Activated CD8-positive, alpha-beta T cell treated with anti-CD3 and anti-CD28 coated beads for 36 hours (primary cell): ENCODE measurements at regions of chr10 and their contacts with region 1.

Region 1: GRCh38 chr10:49407552-49408137 is 11.8 kb upstream of the DRGX start:
- DNase-seq: peak; percentile 84
- ATAC-seq: peak; percentile 77
- H3K4me3 Mint-ChIP-seq: no peak overlapping the region
- H3K27ac Mint-ChIP-seq: no peak overlapping the region
- H3K4me1 Mint-ChIP-seq: no peaks in the 10 kb centered on the region
- H3K27me3 Mint-ChIP-seq: peaks cover 37% of the 10 kb centered on the region
- CTCF ChIP-seq: peak; percentile 83

Region 2: GRCh38 chr10:49047128-49047639 is 360.5 kb before region 1 on chr10:
- CTCF ChIA-PET with region 1: no interaction called
- POLR2A ChIA-PET with region 1: no interaction called
- intact Hi-C with region 1: no loop called
- DNase-seq: no peak
- ATAC-seq: no peak
- H3K4me3 Mint-ChIP-seq: no peak overlapping the region
- H3K27ac Mint-ChIP-seq: no peak overlapping the region
- H3K4me1 Mint-ChIP-seq: no peaks in the 10 kb centered on the region
- H3K27me3 Mint-ChIP-seq: peaks cover 2% of the 10 kb centered on the region
- CTCF ChIP-seq: no peak

Region 3: DNA sequence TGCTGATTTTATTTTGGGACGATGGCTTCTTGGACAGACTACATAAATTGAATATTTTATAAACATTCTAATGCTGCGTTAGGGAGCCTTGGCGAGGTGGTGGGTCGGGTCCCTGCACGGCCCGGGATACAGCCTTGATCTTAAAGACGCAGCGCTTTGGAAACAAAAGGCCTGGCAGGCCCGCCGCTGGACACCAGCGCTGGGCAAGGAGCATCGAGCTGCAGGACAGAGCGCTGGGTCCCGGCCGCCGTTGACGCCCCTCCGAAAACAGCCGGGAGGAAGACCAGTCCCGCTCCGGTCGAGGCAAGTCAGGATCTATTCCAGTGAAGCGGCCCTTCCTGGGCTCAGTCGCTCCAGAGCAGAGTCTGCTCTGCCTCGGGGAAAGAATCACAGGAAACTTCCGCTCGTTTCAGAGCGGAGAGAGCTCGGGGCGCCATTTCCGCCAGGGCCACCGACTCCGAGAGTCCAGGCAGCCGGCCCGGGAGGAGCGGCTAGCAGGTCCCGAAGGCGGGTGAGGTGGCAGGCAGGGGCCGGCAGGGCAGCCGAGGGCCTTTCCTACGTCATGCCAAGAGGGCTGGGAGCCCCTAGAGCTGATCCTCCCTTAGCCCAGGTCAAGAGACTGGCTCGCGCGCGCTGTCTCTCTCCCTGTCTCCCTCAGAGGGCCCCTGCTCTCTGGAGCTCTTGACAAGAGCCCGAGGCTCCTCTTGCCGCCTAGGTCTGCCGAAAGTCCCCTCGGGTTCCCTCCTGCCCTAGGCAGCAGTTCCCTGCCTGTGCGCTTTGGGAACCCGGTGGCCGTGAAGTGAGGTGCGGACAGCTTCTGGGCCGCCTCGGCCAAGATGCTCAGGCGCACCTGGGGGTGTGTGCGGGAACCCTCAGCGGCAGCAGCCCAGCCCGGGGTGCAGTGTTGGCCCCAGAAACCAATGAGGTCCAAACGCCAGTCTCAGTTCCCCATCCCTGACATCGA is 10.3 kb before region 1 on chr10:
- CTCF ChIA-PET with region 1: interaction called, 11 read pairs
- POLR2A ChIA-PET with region 1: no interaction called
- intact Hi-C with region 1: no loop called
- DNase-seq: peak; percentile 5
- ATAC-seq: peak; percentile 22
- H3K4me3 Mint-ChIP-seq: no peak overlapping the region
- H3K27ac Mint-ChIP-seq: no peak overlapping the region
- H3K4me1 Mint-ChIP-seq: peaks cover 7% of the 10 kb centered on the region
- H3K27me3 Mint-ChIP-seq: peaks cover 68% of the 10 kb centered on the region
- CTCF ChIP-seq: no peak

Region 4: GRCh38 chr10:49446031-49446430 is 38.4 kb after region 1 on chr10:
- CTCF ChIA-PET with region 1: interaction called, 12 read pairs
- POLR2A ChIA-PET with region 1: no interaction called
- intact Hi-C with region 1: no loop called
- DNase-seq: peak; percentile 18
- ATAC-seq: no peak
- H3K4me3 Mint-ChIP-seq: no peak overlapping the region
- H3K27ac Mint-ChIP-seq: no peak overlapping the region
- H3K4me1 Mint-ChIP-seq: peaks cover 25% of the 10 kb centered on the region
- H3K27me3 Mint-ChIP-seq: peaks cover 1% of the 10 kb centered on the region
- CTCF ChIP-seq: no peak

Region 5: GRCh38 chr10:49500418-49500817 is 92.8 kb after region 1 on chr10:
- CTCF ChIA-PET with region 1: interaction called, 17 read pairs
- POLR2A ChIA-PET with region 1: no interaction called
- intact Hi-C with region 1: no loop called
- DNase-seq: no peak
- ATAC-seq: no peak
- H3K4me3 Mint-ChIP-seq: no peak overlapping the region
- H3K27ac Mint-ChIP-seq: no peak overlapping the region
- H3K4me1 Mint-ChIP-seq: no peaks in the 10 kb centered on the region
- H3K27me3 Mint-ChIP-seq: no peaks in the 10 kb centered on the region
- CTCF ChIP-seq: no peak

Region 6: DNA sequence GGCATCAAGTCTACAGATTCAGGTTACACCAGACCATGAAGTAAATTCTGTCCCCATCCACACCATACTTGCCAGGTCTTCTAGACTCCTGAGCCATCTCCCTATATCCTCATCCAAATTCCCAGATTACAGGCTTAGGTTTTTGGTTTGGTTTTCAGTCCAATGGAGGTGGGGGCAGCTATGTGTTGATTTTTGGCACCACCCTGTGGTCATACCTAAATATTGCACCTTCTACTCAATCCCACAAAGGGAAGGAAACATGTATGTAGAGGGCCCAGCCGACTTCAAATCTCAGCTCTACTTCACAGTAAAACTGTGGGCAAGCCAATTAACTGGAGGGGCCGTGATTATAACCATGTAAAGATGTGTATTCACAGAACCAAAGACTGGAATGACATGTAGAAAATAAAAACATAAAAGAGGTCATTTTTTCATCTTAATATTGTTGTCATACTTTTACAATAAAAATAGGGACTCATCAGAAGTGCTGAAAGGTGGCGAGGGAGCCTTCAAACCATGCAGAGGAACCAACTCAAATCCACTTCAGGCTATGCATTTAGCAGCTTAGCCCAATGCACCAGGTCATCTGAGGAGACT is 111.4 kb after region 1 on chr10:
- CTCF ChIA-PET with region 1: interaction called, 23 read pairs
- POLR2A ChIA-PET with region 1: interaction called, 4 read pairs
- intact Hi-C with region 1: no loop called
- DNase-seq: peak; percentile 42
- ATAC-seq: peak; percentile 72
- H3K4me3 Mint-ChIP-seq: no peak overlapping the region
- H3K27ac Mint-ChIP-seq: no peak overlapping the region
- H3K4me1 Mint-ChIP-seq: no peaks in the 10 kb centered on the region
- H3K27me3 Mint-ChIP-seq: no peaks in the 10 kb centered on the region
- CTCF ChIP-seq: peak; percentile 76

Region 7: GRCh38 chr10:49679480-49679893 is 271.8 kb after region 1 on chr10 and contains the start of gene C10orf53:
- CTCF ChIA-PET with region 1: no interaction called
- POLR2A ChIA-PET with region 1: no interaction called
- intact Hi-C with region 1: no loop called
- DNase-seq: peak; percentile 57
- ATAC-seq: peak; percentile 80
- H3K4me3 Mint-ChIP-seq: no peak within 1 kb of the TSS
- H3K27ac Mint-ChIP-seq: no peak within 1 kb of the TSS
- H3K4me1 Mint-ChIP-seq: no peaks in the 10 kb centered on the region
- H3K27me3 Mint-ChIP-seq: peaks cover 31% of the 10 kb centered on the region
- CTCF ChIP-seq: no peak
- total RNA-seq, gene C10orf53: not detected